ENCODE measurements at regions of chrX and their contacts with region 1.

Region 1: GRCh38 chrX:110412971-110413721 is 54.5 kb downstream of the RTL9 start:
- DNase-seq: peak; percentile 36 to 74 (median 46)
- ATAC-seq: peak; percentile 79 to 89 (median 87)
- H3K4me3 ChIP-seq: peak overlapping the region in 1 of 12 donors; percentile 21
- H3K27ac ChIP-seq: no peak overlapping the region
- H3K4me1 ChIP-seq: peaks cover 0 to 5% (median 0%) of the 10 kb centered on the region in 12 donors
- H3K27me3 ChIP-seq: peaks cover 0 to 47% (median 0%) of the 10 kb centered on the region in 9 donors
- CTCF ChIP-seq: peak; percentile 61 to 86 (median 76)
- POLR2A ChIP-seq: no peak

Region 2: GRCh38 chrX:109714340-109714958 is 698.7 kb before region 1 on chrX:
- intact Hi-C with region 1: loop called in 1 of 10 experiments (anchors 10 kb)
- DNase-seq: no peak
- ATAC-seq: no peak
- H3K4me3 ChIP-seq: no peak overlapping the region
- H3K27ac ChIP-seq: no peak overlapping the region
- H3K4me1 ChIP-seq: peaks cover 0 to 52% (median 11%) of the 10 kb centered on the region in 12 donors
- H3K27me3 ChIP-seq: peaks cover 0 to 10% (median 0%) of the 10 kb centered on the region in 9 donors
- CTCF ChIP-seq: no peak
- POLR2A ChIP-seq: no peak

Region 3: DNA sequence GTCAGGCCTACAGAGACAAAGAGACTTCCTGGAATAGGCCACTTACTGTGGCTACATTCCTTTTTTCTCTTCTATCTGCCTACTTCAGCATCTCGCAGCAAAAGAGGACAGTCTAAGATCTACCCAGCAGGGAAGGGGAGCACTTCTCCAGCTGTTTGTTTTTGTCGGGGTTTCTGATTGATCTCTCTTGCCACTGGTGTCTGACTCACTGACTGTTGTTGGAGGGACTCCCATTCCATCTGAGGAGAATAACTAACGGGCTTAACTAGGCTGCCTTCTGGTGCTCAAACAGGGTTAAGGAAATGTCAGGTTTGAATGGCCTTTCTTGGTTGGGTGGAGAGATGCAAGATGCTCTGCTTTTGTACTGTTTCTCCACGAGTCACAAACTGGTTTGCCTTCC is 510.5 kb before region 1 on chrX:
- intact Hi-C with region 1: loop called in 2 of 10 experiments (anchors 10 kb)
- DNase-seq: no peak
- ATAC-seq: no peak
- H3K4me3 ChIP-seq: no peak overlapping the region
- H3K27ac ChIP-seq: no peak overlapping the region
- H3K4me1 ChIP-seq: no peaks in the 10 kb centered on the region
- H3K27me3 ChIP-seq: peaks cover 0 to 16% (median 0%) of the 10 kb centered on the region in 9 donors
- CTCF ChIP-seq: no peak
- POLR2A ChIP-seq: no peak

Region 4: GRCh38 chrX:109927663-109928273 is 485.4 kb before region 1 on chrX:
- intact Hi-C with region 1: loop called in 1 of 10 experiments (anchors 10 kb)
- DNase-seq: peak in 4 of 5 donors; percentile 16 to 45 (median 24)
- ATAC-seq: peak; percentile 84 to 96 (median 90)
- H3K4me3 ChIP-seq: no peak overlapping the region
- H3K27ac ChIP-seq: peak overlapping the region; percentile 51 to 92 (median 77)
- H3K4me1 ChIP-seq: peaks cover 0 to 10% (median 0%) of the 10 kb centered on the region in 12 donors
- H3K27me3 ChIP-seq: peaks cover 0 to 9% (median 0%) of the 10 kb centered on the region in 9 donors
- CTCF ChIP-seq: no peak
- POLR2A ChIP-seq: no peak

Region 5: DNA sequence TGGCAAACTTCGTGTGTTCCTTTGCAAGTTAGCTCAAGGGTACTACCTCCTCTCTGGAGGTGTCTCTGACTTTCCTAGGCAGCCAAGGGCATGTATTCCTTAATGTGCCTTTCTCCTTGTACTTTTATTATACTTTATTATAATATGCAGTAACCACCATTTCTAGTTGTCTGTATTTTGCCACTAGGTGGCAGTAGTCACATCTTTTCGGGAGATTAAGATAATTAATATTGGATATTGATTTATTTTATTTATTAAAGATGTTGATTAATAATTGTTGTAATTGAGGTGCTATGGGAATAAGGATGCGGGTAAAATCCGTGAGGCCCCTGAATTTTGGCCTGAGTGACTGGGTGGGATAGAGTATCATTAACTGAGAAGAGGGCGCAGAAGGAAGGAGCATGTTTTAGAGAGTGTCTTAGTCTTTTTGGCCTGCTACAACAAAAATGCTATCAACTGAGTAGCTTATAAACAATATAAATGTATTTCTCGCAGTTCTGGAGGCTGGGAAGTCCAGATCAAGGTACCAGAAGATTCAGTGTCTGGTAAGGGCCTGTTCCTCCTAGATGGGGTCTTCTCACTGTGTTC is 256.9 kb before region 1 on chrX:
- intact Hi-C with region 1: loop called (anchors 1 to 5 kb)
- DNase-seq: no peak
- ATAC-seq: no peak
- H3K4me3 ChIP-seq: no peak overlapping the region
- H3K27ac ChIP-seq: no peak overlapping the region
- H3K4me1 ChIP-seq: peaks cover 0 to 10% (median 4%) of the 10 kb centered on the region in 12 donors
- H3K27me3 ChIP-seq: peaks cover 0 to 5% (median 0%) of the 10 kb centered on the region in 9 donors
- CTCF ChIP-seq: peak; percentile 22 to 62 (median 52)
- POLR2A ChIP-seq: no peak

Region 6: DNA sequence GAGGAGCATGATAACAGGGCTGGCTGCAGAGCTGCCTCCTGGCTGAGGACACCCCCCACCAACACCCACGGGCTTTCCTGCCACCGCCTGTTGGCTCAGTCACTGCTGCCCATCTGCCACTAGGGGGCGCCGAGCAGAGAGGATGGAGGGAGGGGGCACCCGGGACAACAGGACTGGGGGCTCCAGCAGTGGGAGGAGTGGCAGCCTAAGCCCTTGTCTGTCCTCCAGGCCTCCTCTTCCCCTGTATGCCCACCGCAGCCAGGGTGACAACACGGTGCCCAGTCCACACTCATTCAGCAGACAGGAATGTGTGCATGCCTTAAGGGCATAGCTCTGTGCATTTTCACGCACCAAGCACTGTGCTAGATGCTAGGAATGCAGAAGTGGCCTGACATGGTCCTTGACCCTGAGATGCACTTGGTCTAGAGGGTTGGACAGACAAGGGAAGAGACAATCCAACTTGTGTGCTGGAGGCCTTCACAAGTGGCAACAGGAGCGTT is 245.1 kb before region 1 on chrX:
- intact Hi-C with region 1: loop called in 2 of 10 experiments (anchors 5 kb)
- DNase-seq: no peak
- ATAC-seq: peak; percentile 24 to 50 (median 34)
- H3K4me3 ChIP-seq: no peak overlapping the region
- H3K27ac ChIP-seq: no peak overlapping the region
- H3K4me1 ChIP-seq: peaks cover 0 to 9% (median 0%) of the 10 kb centered on the region in 12 donors
- H3K27me3 ChIP-seq: no peaks in the 10 kb centered on the region
- CTCF ChIP-seq: peak; percentile 29 to 63 (median 47)
- POLR2A ChIP-seq: no peak

Region 7: GRCh38 chrX:110924871-110925270 is 511.7 kb after region 1 on chrX:
- intact Hi-C with region 1: no loop called
- DNase-seq: no peak
- ATAC-seq: no peak
- H3K4me3 ChIP-seq: no peak overlapping the region
- H3K27ac ChIP-seq: no peak overlapping the region
- H3K4me1 ChIP-seq: no peaks in the 10 kb centered on the region
- H3K27me3 ChIP-seq: peaks cover 0 to 25% (median 0%) of the 10 kb centered on the region in 9 donors
- CTCF ChIP-seq: no peak
- POLR2A ChIP-seq: no peak